ENCODE measurements at regions of chr1 and their contacts with region 1.

Region 1: DNA sequence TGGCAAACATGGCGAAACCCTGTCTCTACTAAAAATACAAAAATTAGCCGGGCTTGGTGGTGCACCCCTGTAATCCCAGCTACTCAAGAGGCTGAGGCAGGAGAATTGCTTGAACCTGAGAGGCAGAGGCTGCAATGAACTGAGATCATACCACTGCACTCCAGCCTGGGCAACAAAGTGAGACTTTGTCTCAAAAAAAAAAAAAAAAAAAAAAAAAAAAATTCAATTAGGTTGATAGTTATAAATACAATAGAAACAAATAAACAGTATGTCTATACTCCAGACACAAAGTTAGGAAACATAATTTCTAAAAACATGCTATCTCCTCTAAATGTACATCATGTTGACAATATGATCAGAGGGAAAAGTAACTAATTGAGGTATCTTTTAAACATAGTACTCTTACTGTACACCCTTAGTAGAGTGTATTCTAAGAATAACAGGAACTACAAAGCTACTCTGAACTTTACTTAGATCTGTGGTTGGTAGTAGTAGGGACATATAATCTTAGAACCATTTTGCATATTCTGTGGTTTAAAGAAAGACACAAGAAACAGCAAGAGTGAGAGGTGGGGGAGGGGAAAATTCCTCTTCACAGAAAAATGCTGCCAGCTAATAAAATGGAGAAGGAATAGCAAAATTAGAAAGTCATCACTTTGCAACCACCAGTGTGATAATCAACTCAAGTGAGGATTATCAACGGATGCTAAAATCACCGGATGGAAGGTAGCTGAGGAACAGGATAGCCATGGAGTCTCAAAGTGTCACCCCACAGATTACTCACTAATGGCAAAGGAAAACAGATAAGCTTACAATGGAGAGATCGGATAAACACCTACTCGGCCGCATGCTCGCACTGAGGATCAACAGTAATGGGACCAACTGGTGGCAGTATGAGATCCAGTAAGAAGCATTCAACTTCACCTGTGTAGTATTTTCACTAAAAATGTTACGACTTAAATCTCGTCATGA is 35.0 kb downstream of the MTOR start:
- DNase-seq: no peak
- H3K4me3 ChIP-seq: no peak overlapping the region
- H3K27ac ChIP-seq: no peak overlapping the region
- H3K4me1 ChIP-seq: no peaks in the 10 kb centered on the region
- H3K27me3 ChIP-seq: no peaks in the 10 kb centered on the region
- CTCF ChIP-seq: no peak

Region 2: DNA sequence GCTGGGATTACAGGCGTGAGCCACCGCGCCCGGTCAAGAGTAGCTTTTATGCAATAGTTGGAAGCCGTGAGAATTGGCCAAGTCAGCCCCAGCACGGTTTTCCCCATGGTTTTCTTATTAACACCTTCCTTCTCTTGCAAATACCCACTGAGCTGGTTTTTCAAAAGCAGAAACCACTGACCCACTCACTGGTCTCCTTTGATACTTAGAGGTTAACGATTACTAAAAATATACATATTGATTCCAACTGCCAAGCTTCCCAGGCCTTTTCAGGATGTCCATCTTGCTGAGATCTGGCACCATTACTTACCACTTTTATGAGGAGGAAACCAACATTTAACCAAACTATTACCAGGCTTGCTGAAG is 240.9 kb before region 1 on chr1:
- CTCF ChIA-PET with region 1: no interaction called
- POLR2A ChIA-PET with region 1: no interaction called
- intact Hi-C with region 1: no loop called
- DNase-seq: no peak
- H3K4me3 ChIP-seq: no peak overlapping the region
- H3K27ac ChIP-seq: no peak overlapping the region
- H3K4me1 ChIP-seq: no peaks in the 10 kb centered on the region
- H3K27me3 ChIP-seq: no peaks in the 10 kb centered on the region
- CTCF ChIP-seq: no peak

Region 3: DNA sequence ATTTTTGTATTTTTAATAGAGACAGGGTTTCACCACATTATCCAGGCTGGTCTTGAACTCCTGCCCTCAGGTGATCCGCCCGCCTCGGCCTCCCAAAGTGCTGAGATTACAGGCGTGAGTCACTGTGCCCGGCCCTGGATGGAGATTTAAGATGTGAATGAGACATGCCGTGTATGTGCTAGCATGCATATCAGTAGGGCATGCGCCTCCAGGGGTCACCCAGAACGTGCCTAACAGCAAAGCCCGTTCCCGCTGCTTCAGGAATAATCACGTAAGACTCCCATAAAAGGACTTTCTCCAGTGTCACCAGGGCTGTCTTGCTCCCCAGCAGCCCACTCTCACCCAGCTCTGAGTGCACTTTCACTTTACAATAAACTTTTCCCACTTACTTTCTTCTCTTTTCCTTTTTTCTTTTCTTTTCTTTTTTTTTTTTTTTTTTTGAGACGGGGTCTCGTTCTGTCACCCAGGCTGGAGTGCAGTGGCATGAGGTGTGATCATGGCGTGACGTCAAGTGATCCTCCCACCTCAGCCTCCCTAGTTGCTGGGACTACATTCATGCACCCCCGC is 204.6 kb after region 1 on chr1:
- CTCF ChIA-PET with region 1: interaction called, 11 read pairs
- POLR2A ChIA-PET with region 1: no interaction called
- intact Hi-C with region 1: no loop called
- DNase-seq: no peak
- H3K4me3 ChIP-seq: no peak overlapping the region
- H3K27ac ChIP-seq: no peak overlapping the region
- H3K4me1 ChIP-seq: no peaks in the 10 kb centered on the region
- H3K27me3 ChIP-seq: peaks cover 95% of the 10 kb centered on the region
- CTCF ChIP-seq: no peak